ENCODE measurements at regions of chr1 and their contacts with region 1.

Region 1: DNA sequence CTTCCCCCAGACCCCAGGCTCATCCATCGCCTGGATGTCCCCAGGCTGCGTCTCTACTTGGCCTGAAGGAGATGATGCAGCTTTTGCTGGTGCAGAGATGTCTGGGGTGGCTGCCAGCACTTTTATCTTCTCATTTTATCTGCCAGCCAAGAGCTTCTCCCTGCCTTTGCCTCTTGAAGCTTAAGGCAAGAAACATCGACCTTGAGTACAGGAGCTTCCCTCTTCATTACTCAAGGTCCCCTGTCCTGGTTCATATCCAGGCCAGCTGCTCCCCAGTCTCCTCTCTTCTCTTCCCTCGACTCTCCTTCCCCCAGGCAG is 9.1 kb upstream of the H6PD start:
- DNase-seq: no peak
- ATAC-seq: no peak
- H3K4me3 ChIP-seq: no peak overlapping the region
- H3K4me3 Mint-ChIP-seq: no peak overlapping the region
- H3K27ac ChIP-seq: no peak overlapping the region
- H3K27ac Mint-ChIP-seq: no peak overlapping the region
- H3K4me1 ChIP-seq: no peaks in the 10 kb centered on the region
- H3K4me1 Mint-ChIP-seq: no peaks in the 10 kb centered on the region
- H3K27me3 ChIP-seq: peaks cover 0 to 20% of the 10 kb centered on the region in 2 experiments
- H3K27me3 Mint-ChIP-seq: no peaks in the 10 kb centered on the region

Region 2: DNA sequence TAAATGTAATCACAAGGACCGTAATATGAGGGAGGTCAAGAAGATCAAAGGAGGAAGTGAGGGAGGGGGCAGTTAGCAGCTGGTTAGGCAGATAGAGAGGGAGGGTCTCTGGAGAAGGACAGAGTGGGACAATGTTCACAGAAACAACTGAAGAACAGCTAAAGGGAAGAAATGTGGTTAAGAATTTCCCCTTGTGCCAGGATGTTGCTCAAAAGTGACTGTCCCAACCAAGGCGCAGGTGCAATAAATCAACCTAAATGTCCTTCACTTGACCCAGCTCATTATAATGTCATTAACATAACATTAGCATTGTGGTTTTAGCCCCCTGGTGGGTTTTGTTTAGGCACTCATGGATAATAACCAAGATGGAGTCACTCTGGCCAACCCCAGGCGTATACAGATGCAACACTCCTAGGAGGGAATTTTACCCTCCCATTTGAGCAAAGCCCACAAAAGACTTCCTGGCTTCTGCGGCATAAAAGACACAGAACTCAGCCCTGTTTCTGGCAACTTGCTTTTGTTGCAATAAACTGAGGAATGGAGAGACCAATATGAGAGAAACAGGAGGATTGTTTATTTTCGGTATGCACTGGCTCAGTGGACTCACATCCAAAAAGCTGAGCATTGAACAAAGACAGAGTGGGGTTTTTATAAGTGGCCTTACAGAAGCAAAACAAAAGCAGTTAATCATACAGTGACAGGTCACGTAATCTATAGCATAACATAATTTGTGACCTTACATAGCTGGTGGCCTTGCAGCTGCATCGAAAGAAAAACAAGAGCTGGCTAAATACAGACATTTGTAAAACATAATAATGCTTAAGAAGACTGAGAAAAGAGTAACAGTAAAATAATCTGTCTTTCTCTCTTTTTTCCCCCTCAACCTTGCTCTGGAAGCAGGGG is 286.9 kb before region 1 on chr1:
- CTCF ChIA-PET with region 1: no interaction called
- POLR2A ChIA-PET with region 1: no interaction called
- DNase-seq: no peak
- ATAC-seq: peak; percentile 54 to 81 (median 57)
- H3K4me3 ChIP-seq: no peak overlapping the region
- H3K4me3 Mint-ChIP-seq: peak overlapping the region in 1 of 3 donors; percentile 51
- H3K27ac ChIP-seq: peak overlapping the region; percentile 32
- H3K27ac Mint-ChIP-seq: peak overlapping the region; percentile 85 to 87
- H3K4me1 ChIP-seq: peaks cover 22 to 48% of the 10 kb centered on the region in 2 experiments
- H3K4me1 Mint-ChIP-seq: peaks cover 46 to 58% (median 52%) of the 10 kb centered on the region in 3 donors
- H3K27me3 ChIP-seq: peaks cover 0 to 3% of the 10 kb centered on the region in 2 experiments
- H3K27me3 Mint-ChIP-seq: no peaks in the 10 kb centered on the region

Region 3: DNA sequence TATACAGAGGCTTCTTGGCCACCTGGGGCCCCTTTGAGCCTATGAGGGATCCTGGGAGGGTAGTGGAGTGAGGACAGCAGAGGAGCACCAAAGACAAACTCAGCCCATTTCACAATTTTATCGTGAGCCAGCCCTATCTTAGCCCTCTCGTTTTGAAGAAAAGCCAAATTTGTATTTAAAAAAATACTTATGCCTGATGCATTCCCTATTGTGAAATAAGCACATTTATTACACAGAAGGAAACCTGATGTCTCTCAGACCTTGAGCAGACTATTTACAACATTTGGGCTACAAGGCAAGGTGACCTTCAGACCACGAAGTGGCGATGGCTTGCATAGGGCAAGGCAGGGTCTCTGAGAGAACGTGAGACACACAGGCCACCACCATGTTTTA is 32.2 kb before region 1 on chr1:
- CTCF ChIA-PET with region 1: interaction called in 1 of 2 experiments, 11 read pairs
- POLR2A ChIA-PET with region 1: no interaction called
- DNase-seq: no peak
- ATAC-seq: no peak
- H3K4me3 ChIP-seq: no peak overlapping the region
- H3K4me3 Mint-ChIP-seq: no peak overlapping the region
- H3K27ac ChIP-seq: no peak overlapping the region
- H3K27ac Mint-ChIP-seq: no peak overlapping the region
- H3K4me1 ChIP-seq: peaks cover 0 to 6% of the 10 kb centered on the region in 2 experiments
- H3K4me1 Mint-ChIP-seq: peaks cover 6 to 8% (median 7%) of the 10 kb centered on the region in 3 donors
- H3K27me3 ChIP-seq: peaks cover 2 to 51% of the 10 kb centered on the region in 2 experiments
- H3K27me3 Mint-ChIP-seq: peaks cover 25 to 33% of the 10 kb centered on the region in 2 donors

Region 4: GRCh38 chr1:9676815-9677393 is 451.5 kb after region 1 on chr1:
- CTCF ChIA-PET with region 1: no interaction called
- POLR2A ChIA-PET with region 1: no interaction called
- DNase-seq: no peak
- ATAC-seq: no peak
- H3K4me3 ChIP-seq: no peak overlapping the region
- H3K4me3 Mint-ChIP-seq: peak overlapping the region in 1 of 3 donors; percentile 55
- H3K27ac ChIP-seq: peak overlapping the region; percentile 24
- H3K27ac Mint-ChIP-seq: peak overlapping the region; percentile 21 to 92
- H3K4me1 ChIP-seq: peaks cover 0 to 92% of the 10 kb centered on the region in 2 experiments
- H3K4me1 Mint-ChIP-seq: peaks cover 76 to 81% (median 77%) of the 10 kb centered on the region in 3 donors
- H3K27me3 ChIP-seq: no peaks in the 10 kb centered on the region
- H3K27me3 Mint-ChIP-seq: no peaks in the 10 kb centered on the region